GM10248 (cell line): ENCODE measurements at regions of chr5 and their contacts with region 1.

Region 1: DNA sequence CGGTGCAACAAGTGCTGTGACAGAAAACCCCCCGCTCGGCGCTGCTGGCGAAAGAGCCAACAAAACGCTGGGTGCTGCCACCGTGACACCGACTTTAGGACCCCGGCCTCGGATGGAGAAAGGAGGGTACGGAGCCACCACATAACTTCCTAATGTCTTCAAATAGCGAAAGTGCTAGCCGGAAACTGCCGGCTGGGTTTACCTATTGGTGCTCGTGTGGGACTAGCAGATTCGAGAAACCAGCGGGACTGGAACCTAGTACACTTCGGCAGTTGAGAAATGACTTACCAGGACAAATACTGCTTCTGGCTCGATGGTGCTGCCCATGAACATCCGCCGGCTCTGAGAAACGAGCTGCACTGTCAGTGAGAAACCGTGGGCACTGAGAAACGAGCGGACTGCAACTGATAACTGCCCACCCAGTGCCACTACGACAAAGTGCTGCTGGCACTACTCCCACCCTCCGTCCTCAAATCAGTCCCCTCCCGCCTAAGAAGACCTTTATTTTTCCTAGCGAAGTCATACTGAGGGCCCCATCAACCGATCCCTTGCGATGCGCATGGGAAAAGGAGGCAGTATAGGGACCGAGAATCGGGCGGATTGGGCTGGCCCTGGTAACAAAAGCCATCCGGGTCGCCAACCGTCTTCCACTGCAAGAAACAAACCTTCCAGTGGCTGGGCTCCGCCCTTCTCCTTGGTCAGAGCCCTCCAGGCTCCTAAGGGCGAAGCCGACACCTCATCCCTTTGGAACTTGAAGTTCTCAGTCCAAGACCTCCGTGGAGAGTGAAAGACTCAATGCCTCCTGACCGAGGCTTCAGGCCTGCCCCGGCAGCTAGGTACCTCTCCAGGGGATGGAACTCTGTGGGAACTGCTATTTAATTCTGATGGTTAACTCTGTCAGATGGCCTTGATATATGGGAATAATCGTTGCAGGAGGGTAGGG is 27.0 kb upstream of the ANXA2R start:
- DNase-seq: peak; percentile 74
- CTCF ChIP-seq: no peak

Region 2: GRCh38 chr5:42898760-42899159 is 168.3 kb before region 1 on chr5:
- CTCF ChIA-PET with region 1: no interaction called
- POLR2A ChIA-PET with region 1: no interaction called
- DNase-seq: no peak
- CTCF ChIP-seq: no peak

Region 3: DNA sequence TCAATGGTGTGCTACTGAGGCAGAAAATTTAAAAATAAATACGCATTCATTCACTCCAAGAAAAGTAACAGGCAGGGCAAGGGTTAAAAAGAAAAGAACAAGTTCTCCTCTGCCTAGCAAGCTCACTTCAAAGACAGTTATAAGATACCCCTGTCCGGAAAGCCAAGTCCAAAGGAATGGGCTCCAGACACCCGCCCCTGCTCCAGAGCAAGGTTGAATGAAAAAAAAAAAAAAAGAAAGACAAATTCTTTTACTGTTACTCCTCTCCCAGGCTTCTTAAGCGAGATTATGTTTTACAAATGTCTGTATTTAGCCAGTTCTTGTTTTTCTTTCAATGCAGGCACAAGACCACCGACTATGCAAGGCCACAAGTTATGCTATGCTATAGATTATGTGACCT is 17.8 kb before region 1 on chr5:
- CTCF ChIA-PET with region 1: interaction called, 26 read pairs
- POLR2A ChIA-PET with region 1: no interaction called
- DNase-seq: no peak
- CTCF ChIP-seq: no peak